Heart right ventricle (tissue), 16 donors: ENCODE measurements at regions of chr22 and their contacts with region 1.

Region 1: DNA sequence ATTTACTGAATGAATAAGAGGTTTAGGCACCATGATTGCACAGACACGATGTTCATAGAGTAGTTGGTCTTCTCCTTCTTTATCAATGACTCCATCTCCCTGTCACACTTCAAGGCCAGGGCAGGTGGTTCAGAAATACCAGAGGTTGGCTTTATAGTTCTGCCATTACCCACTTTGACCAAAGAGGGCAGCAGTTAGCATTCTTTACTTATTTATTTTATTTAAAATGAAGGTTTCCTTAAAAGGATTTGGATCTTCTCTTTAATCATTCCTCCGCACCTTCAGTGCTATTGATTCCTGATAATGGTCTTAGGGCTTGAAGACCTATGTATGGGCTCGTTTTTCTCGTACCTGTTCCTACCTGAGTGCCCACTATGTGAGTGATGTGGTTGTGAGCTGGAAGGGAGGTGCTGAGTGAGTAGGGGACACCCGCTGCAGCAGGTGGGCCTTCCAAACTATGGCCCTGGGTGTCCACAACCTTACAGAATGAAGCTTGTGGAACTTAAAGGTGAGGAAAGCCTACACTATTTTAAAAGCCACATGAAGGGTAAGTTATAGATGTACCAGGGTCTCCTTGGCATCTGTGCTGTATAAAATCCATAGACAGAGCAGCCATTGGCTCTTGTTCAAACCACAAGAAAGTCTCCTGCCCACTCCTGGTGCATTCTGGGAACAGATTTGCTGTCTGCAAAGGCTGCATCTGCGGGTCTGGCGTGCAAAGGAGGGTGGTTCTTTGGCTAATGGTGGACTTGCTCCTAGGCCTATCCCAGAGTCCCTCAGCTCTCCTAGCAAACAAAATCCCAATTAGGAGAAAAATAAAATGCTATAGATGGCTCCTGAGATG is 35.0 kb downstream of the TIMP3 start:
- DNase-seq: no peak
- ATAC-seq: no peak
- H3K4me3 ChIP-seq: no peak overlapping the region
- H3K27ac ChIP-seq: peak overlapping the region in 5 of 10 donors; percentile 1 to 86 (median 42)
- H3K4me1 ChIP-seq: peaks cover 58 to 100% (median 96%) of the 10 kb centered on the region in 9 donors
- H3K27me3 ChIP-seq: no peaks in the 10 kb centered on the region
- CTCF ChIP-seq: peak; percentile 30 to 64 (median 48)

Region 2: GRCh38 chr22:32700191-32700882 is 136.2 kb before region 1 on chr22:
- intact Hi-C with region 1: no loop called
- DNase-seq: peak; percentile 30 to 34
- ATAC-seq: peak; percentile 52 to 74 (median 62)
- H3K4me3 ChIP-seq: no peak overlapping the region
- H3K27ac ChIP-seq: peak overlapping the region in 9 of 10 donors; percentile 28 to 80 (median 56)
- H3K4me1 ChIP-seq: peaks cover 0 to 26% (median 21%) of the 10 kb centered on the region in 9 donors
- H3K27me3 ChIP-seq: no peaks in the 10 kb centered on the region
- CTCF ChIP-seq: no peak

Region 3: GRCh38 chr22:32951076-32951806 is 114.7 kb after region 1 on chr22:
- intact Hi-C with region 1: loop called in 3 of 10 experiments (anchors 5 to 10 kb)
- DNase-seq: peak in 1 of 2 donors; percentile 17
- ATAC-seq: peak in 4 of 8 donors; percentile 9 to 44 (median 34)
- H3K4me3 ChIP-seq: no peak overlapping the region
- H3K27ac ChIP-seq: peak overlapping the region in 7 of 10 donors; percentile 28 to 67 (median 56)
- H3K4me1 ChIP-seq: peaks cover 3 to 39% (median 34%) of the 10 kb centered on the region in 9 donors
- H3K27me3 ChIP-seq: no peaks in the 10 kb centered on the region
- CTCF ChIP-seq: peak in 5 of 9 donors; percentile 6 to 25 (median 12)

Region 4: GRCh38 chr22:32957200-32957803 is 120.8 kb after region 1 on chr22:
- intact Hi-C with region 1: loop called in 3 of 10 experiments (anchors 5 to 10 kb)
- DNase-seq: no peak
- ATAC-seq: peak in 5 of 8 donors; percentile 25 to 65 (median 28)
- H3K4me3 ChIP-seq: no peak overlapping the region
- H3K27ac ChIP-seq: peak overlapping the region in 5 of 10 donors; percentile 16 to 41 (median 19)
- H3K4me1 ChIP-seq: peaks cover 3 to 28% (median 22%) of the 10 kb centered on the region in 9 donors
- H3K27me3 ChIP-seq: no peaks in the 10 kb centered on the region
- CTCF ChIP-seq: no peak